Dorsolateral prefrontal cortex (tissue), 120 donors: ENCODE measurements at regions of chr4 and their contacts with region 1.

Region 1: DNA sequence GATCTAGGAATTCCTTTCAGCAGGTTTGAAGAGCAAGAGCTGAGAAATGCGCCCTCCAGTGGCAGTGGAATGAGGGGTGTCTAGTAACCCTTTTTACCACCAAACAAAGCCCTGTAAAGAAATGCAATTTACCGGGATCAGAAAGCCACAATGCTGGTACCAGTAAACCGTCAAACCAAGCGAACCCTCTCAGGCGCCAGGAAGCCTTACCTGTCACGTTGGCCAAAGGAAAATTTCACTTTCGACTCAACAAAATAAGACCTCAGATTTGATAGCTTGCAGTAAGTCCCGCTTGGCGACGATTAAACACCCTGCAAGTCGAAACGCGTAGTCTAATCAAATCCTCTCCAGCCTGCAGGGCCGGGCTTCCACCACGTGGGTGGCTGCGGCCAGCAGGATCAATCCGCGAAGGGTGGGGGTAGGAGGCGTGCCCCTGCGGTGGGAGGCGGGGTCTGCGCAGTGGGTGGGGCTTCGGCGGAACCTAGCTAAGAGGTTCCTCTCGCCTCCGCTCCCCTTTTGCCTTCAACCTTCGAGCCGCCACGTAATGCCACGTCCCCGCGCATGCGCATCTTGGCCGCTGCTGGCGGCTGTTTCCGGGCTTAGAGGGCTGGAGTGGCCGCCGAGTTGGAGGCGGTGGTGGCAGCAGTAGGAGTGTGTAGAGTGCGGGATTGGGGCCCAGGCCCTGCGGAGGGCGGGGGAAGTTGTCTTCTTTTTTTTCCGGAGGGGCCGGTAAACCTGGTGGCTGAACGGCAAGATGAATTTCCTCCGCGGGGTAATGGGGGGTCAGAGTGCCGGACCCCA is at the start of gene USO1:
- DNase-seq: peak; percentile 98 to 100 (median 99)
- H3K4me3 ChIP-seq: peak within 1 kb of the TSS; percentile 68 to 98 (median 94)
- H3K27ac ChIP-seq: peak within 1 kb of the TSS; percentile 68 to 97 (median 88)
- H3K27me3 ChIP-seq: no peaks in the 10 kb centered on the region
- CTCF ChIP-seq: peak; percentile 38 to 80 (median 66)
- total RNA-seq, gene USO1: 29.0 to 63.1 (median 46.5) TPM

Region 2: GRCh38 chr4:75514131-75514948 is 209.9 kb before region 1 on chr4 and contains the starts of genes RCHY1 and THAP6:
- intact Hi-C with region 1: loop called in 1 of 2 experiments (anchors 10 kb)
- DNase-seq: peak; percentile 92 to 98 (median 96)
- H3K4me3 ChIP-seq: peak within 1 kb of the TSS; percentile 65 to 98 (median 87)
- H3K27ac ChIP-seq: peak within 1 kb of the TSS; percentile 79 to 99 (median 95)
- H3K27me3 ChIP-seq: no peaks in the 10 kb centered on the region
- CTCF ChIP-seq: peak in 37 of 56 donors; percentile 5 to 64 (median 31)
- total RNA-seq, gene RCHY1: 20.6 to 68.6 (median 39.7) TPM
- total RNA-seq, gene THAP6: 12.4 to 45.4 (median 22.4) TPM

Region 3: GRCh38 chr4:75844151-75844662 is 119.9 kb after region 1 on chr4:
- intact Hi-C with region 1: loop called (anchors 2 to 10 kb)
- DNase-seq: no peak
- H3K4me3 ChIP-seq: no peak overlapping the region
- H3K27ac ChIP-seq: peak overlapping the region in 12 of 59 donors; percentile 6 to 49 (median 34)
- H3K27me3 ChIP-seq: no peaks in the 10 kb centered on the region
- CTCF ChIP-seq: no peak

Region 4: DNA sequence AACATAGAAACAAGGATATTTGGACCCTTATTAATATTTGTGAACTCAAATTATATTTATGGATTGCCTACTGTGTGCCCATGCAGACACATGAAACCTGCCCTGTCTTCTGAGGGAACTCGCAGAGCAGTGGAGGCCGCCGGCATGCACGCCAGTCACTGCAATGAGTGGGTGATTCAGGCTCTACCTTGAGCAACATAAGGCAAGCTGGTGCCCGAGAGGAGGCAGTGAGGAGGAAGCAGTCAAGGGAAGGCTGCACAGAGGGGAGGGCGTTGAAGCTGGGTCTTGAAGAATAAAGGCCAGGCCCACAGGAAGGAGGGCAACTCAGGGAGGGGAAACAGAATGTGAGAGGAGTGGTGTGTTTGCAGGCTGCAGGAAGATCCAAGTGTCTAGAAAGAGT is 125.2 kb after region 1 on chr4:
- intact Hi-C with region 1: loop called (anchors 2 to 10 kb)
- DNase-seq: no peak
- H3K4me3 ChIP-seq: no peak overlapping the region
- H3K27ac ChIP-seq: no peak overlapping the region
- H3K27me3 ChIP-seq: no peaks in the 10 kb centered on the region
- CTCF ChIP-seq: no peak